CD8-positive, alpha-beta T cell (primary cell): ENCODE measurements at regions of chr4 and their contacts with region 1.

Region 1: GRCh38 chr4:80500613-80501012 is 165.1 kb downstream of the CFAP299 start:
- DNase-seq: peak in 5 of 9 experiments; percentile 6 to 78 (median 46)
- ATAC-seq: peak; percentile 96
- H3K4me3 ChIP-seq: peak overlapping the region in 1 of 2 experiments; percentile 8
- H3K4me3 Mint-ChIP-seq: peak overlapping the region; percentile 43
- H3K27ac ChIP-seq: peak overlapping the region in 1 of 2 experiments; percentile 26
- H3K27ac Mint-ChIP-seq: peak overlapping the region; percentile 67
- H3K4me1 ChIP-seq: peaks cover 32% of the 10 kb centered on the region
- H3K4me1 Mint-ChIP-seq: peaks cover 62% of the 10 kb centered on the region
- H3K27me3 ChIP-seq: no peaks in the 10 kb centered on the region
- H3K27me3 Mint-ChIP-seq: no peaks in the 10 kb centered on the region
- CTCF ChIP-seq: no peak

Region 2: DNA sequence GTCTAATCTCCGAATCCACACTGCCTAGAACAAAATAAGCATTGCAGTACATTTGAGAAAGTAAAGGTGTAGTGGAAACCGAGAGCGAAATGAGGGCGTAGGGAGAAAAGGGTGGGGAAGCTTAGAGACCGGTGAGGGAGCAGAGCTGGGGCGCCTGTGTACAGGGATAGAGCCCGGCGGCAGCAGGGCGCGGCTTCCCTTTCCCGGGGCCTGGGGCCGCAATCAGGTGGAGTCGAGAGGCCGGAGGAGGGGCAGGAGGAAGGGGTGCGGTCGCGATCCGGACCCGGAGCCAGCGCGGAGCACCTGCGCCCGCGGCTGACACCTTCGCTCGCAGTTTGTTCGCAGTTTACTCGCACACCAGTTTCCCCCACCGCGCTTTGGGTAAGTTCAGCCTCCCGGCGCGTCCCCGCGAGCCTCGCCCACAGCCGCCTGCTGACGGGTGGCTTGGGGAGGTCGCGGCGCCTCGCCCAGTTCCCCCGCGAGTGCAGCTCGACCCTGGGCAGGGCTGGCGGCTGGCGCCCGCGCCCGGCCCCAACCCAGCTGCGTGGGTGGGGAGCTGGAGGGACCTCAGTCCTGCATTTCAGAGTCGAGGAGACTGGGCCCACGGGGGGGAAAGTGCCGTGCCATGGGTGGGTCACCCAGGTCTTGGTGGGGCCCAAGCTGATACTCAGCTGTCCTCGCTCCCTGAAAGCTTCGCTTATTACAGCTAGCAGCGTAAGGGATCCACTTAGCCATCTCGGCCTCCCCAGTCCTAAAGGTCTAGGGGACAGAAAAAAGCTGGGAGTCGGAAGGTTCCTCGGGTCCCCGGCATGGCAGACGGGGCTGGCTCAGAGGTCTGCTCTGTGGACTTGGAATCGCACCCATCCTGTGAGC is 1948.9 kb before region 1 on chr4 and contains the start of gene ANXA3:
- CTCF ChIA-PET with region 1: no interaction called
- POLR2A ChIA-PET with region 1: no interaction called
- intact Hi-C with region 1: no loop called
- DNase-seq: peak in 1 of 9 experiments; percentile 2
- ATAC-seq: no peak
- H3K4me3 ChIP-seq: peak within 1 kb of the TSS in 1 of 2 experiments; percentile 33
- H3K4me3 Mint-ChIP-seq: peak within 1 kb of the TSS; percentile 68
- H3K27ac ChIP-seq: no peak within 1 kb of the TSS
- H3K27ac Mint-ChIP-seq: no peak within 1 kb of the TSS
- H3K4me1 ChIP-seq: peaks cover 5% of the 10 kb centered on the region
- H3K4me1 Mint-ChIP-seq: peaks cover 5% of the 10 kb centered on the region
- H3K27me3 ChIP-seq: peaks cover 6% of the 10 kb centered on the region in 2 experiments
- H3K27me3 Mint-ChIP-seq: peaks cover 32% of the 10 kb centered on the region
- CTCF ChIP-seq: no peak
- total RNA-seq, gene ANXA3: not detected

Region 3: GRCh38 chr4:80438016-80438415 is 62.6 kb before region 1 on chr4:
- CTCF ChIA-PET with region 1: interaction called, 3 read pairs
- POLR2A ChIA-PET with region 1: interaction called, 5 read pairs
- intact Hi-C with region 1: loop called in 1 of 2 experiments (anchors 2 kb)
- DNase-seq: peak in 2 of 9 experiments; percentile 11 to 48
- ATAC-seq: no peak
- H3K4me3 ChIP-seq: no peak overlapping the region
- H3K4me3 Mint-ChIP-seq: no peak overlapping the region
- H3K27ac ChIP-seq: peak overlapping the region in 1 of 2 experiments; percentile 31
- H3K27ac Mint-ChIP-seq: no peak overlapping the region
- H3K4me1 ChIP-seq: peaks cover 24% of the 10 kb centered on the region
- H3K4me1 Mint-ChIP-seq: peaks cover 30% of the 10 kb centered on the region
- H3K27me3 ChIP-seq: no peaks in the 10 kb centered on the region
- H3K27me3 Mint-ChIP-seq: no peaks in the 10 kb centered on the region
- CTCF ChIP-seq: no peak

Region 4: DNA sequence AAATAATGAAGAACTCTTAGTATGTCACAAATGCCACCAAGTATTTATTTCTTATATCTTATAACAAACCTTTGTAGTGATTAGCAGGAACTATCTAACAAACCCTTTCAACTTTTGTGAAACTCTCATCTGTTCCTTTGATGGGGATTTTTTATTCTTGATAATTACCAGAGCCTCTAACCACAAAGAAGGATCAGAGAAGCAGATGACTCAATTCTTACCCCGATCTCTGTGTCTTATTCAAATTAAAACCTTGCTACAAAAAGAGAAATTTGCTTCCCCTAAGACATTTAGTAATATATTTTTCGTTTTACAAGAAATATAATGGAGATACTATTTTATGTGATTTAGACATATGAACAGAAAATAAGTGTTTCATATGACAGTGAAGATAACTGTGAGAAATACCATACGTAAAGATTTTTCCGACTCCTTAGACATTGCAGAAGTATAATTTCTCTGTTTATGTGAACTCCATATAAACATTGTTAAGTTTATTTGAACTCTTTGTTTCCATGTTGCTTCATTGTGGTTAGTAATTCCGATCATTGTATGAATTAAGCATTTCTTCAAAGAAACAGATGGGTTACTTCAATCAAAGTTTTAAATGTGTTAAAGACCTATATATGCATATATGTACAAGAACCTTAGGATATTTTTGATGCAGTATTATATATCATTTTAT is 40.3 kb after region 1 on chr4:
- CTCF ChIA-PET with region 1: interaction called, 4 read pairs
- POLR2A ChIA-PET with region 1: no interaction called
- intact Hi-C with region 1: loop called in 1 of 2 experiments (anchors 5 kb)
- DNase-seq: peak in 2 of 9 experiments; percentile 18 to 39
- ATAC-seq: peak; percentile 48
- H3K4me3 ChIP-seq: no peak overlapping the region
- H3K4me3 Mint-ChIP-seq: no peak overlapping the region
- H3K27ac ChIP-seq: no peak overlapping the region
- H3K27ac Mint-ChIP-seq: no peak overlapping the region
- H3K4me1 ChIP-seq: peaks cover 12% of the 10 kb centered on the region
- H3K4me1 Mint-ChIP-seq: peaks cover 20% of the 10 kb centered on the region
- H3K27me3 ChIP-seq: no peaks in the 10 kb centered on the region
- H3K27me3 Mint-ChIP-seq: peaks cover 2% of the 10 kb centered on the region
- CTCF ChIP-seq: no peak